PC-9 (cell line): ENCODE measurements at regions of chr9 and their contacts with region 1.

Region 1: GRCh38 chr9:96458226-96458625 is 8.3 kb downstream of the HABP4 start:
- DNase-seq: no peak
- H3K4me3 ChIP-seq: no peak overlapping the region
- H3K27ac ChIP-seq: no peak overlapping the region
- H3K4me1 ChIP-seq: no peaks in the 10 kb centered on the region
- H3K27me3 ChIP-seq: no peaks in the 10 kb centered on the region
- CTCF ChIP-seq: no peak

Region 2: DNA sequence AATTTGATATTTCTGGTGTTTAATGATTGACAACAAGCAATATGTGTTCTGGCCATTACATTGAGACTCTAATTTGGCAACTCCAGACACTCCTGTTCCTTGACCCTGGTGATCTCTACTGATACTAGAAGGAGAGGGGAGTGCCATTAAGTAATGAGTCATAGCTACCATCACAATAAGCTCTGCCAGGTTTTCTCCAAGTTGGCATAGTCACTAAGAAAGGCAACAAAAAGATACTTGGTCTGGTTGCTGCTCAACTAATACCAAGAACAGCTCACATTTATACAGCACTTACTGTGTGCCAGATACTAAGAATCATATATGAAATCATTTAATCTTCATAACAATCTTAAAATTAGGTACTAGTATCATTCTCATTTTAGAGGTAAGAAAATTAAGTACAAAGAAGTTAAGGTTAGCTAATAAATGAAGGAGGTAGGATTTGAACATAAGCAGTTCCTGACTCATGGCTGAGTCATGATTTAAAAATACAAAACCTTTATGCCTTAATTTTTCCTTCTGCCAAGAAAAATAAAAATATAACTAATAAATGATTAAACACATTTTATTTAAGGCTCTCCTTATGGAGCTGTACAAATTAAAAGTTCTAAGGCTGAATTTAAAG is 216.8 kb after region 1 on chr9:
- CTCF ChIA-PET with region 1: interaction called, 10 read pairs
- POLR2A ChIA-PET with region 1: no interaction called
- intact Hi-C with region 1: no loop called
- DNase-seq: peak; percentile 20 to 60
- H3K4me3 ChIP-seq: no peak overlapping the region
- H3K27ac ChIP-seq: 0 out of 2 replicates have a peak overlapping the region, but pooled peaks have one; percentile 0
- H3K4me1 ChIP-seq: peaks cover 12% of the 10 kb centered on the region; the same call in 1 of the 2 replicates
- H3K27me3 ChIP-seq: no peaks in the 10 kb centered on the region
- CTCF ChIP-seq: no peak